ENCODE measurements at regions of chr12 and their contacts with region 1.

Region 1: DNA sequence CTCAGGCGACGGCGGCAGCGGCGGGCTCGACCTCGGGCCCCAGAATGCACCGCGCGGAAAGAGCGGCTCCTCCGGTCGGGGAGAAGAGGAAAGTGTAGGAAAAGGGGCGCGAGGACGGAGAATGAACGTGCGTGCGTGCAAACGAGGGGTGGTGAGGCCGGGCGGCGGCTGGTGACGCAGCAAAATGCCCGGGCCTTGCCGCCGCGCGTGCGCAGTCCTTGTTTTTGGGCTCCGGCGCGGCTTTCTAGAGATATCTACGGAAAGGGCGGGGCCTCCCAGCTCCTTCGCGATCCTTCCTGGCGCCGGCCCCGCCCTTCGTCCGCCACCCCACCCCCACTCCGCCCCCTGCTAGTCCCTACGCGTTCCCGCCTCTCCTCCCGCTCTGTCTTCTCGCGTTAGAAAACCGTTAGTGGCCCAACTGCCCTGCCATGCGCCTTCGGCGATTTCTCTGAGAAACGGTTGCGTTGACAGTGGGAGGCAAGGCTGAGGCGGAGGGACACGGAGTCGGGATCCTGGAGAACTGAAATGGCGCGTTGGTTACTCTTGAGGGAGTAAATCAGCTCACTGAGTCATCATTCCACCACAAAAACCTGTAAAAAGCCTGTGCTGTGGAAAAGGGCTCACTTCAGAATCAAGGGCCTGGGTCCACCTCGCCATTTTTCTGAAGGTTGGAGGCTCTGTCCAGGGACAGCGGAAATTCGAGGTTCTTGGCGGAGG is at the start of gene PTGES3:
- DNase-seq: peak; percentile 93 to 100 (median 97)
- ATAC-seq: peak; percentile 73
- H3K4me3 ChIP-seq: peak within 1 kb of the TSS; percentile 96
- H3K4me3 Mint-ChIP-seq: peak within 1 kb of the TSS; percentile 100
- H3K27ac ChIP-seq: peak within 1 kb of the TSS; percentile 98 to 99
- H3K27ac Mint-ChIP-seq: peak within 1 kb of the TSS; percentile 96
- H3K4me1 ChIP-seq: peaks cover 39% of the 10 kb centered on the region
- H3K4me1 Mint-ChIP-seq: peaks cover 43% of the 10 kb centered on the region
- H3K27me3 ChIP-seq: no peaks in the 10 kb centered on the region
- H3K27me3 Mint-ChIP-seq: no peaks in the 10 kb centered on the region
- CTCF ChIP-seq: no peak
- total RNA-seq, gene PTGES3: 146 to 154 TPM

Region 2: GRCh38 chr12:56657416-56658379 is 30.6 kb before region 1 on chr12:
- CTCF ChIA-PET with region 1: no interaction called
- POLR2A ChIA-PET with region 1: interaction called, 11 read pairs
- intact Hi-C with region 1: no loop called
- DNase-seq: no peak
- ATAC-seq: no peak
- H3K4me3 ChIP-seq: no peak overlapping the region
- H3K4me3 Mint-ChIP-seq: no peak overlapping the region
- H3K27ac ChIP-seq: no peak overlapping the region
- H3K27ac Mint-ChIP-seq: no peak overlapping the region
- H3K4me1 ChIP-seq: no peaks in the 10 kb centered on the region
- H3K4me1 Mint-ChIP-seq: no peaks in the 10 kb centered on the region
- H3K27me3 ChIP-seq: no peaks in the 10 kb centered on the region
- H3K27me3 Mint-ChIP-seq: no peaks in the 10 kb centered on the region
- CTCF ChIP-seq: no peak

Region 3: GRCh38 chr12:56677680-56678079 is 10.6 kb before region 1 on chr12:
- CTCF ChIA-PET with region 1: interaction called, 5 read pairs
- POLR2A ChIA-PET with region 1: interaction called, 64 read pairs
- intact Hi-C with region 1: no loop called
- DNase-seq: no peak
- ATAC-seq: no peak
- H3K4me3 ChIP-seq: no peak overlapping the region
- H3K4me3 Mint-ChIP-seq: peak overlapping the region; percentile 35
- H3K27ac ChIP-seq: no peak overlapping the region
- H3K27ac Mint-ChIP-seq: peak overlapping the region; percentile 74
- H3K4me1 ChIP-seq: peaks cover 74% of the 10 kb centered on the region
- H3K4me1 Mint-ChIP-seq: peaks cover 58% of the 10 kb centered on the region
- H3K27me3 ChIP-seq: no peaks in the 10 kb centered on the region
- H3K27me3 Mint-ChIP-seq: no peaks in the 10 kb centered on the region
- CTCF ChIP-seq: no peak

Region 4: DNA sequence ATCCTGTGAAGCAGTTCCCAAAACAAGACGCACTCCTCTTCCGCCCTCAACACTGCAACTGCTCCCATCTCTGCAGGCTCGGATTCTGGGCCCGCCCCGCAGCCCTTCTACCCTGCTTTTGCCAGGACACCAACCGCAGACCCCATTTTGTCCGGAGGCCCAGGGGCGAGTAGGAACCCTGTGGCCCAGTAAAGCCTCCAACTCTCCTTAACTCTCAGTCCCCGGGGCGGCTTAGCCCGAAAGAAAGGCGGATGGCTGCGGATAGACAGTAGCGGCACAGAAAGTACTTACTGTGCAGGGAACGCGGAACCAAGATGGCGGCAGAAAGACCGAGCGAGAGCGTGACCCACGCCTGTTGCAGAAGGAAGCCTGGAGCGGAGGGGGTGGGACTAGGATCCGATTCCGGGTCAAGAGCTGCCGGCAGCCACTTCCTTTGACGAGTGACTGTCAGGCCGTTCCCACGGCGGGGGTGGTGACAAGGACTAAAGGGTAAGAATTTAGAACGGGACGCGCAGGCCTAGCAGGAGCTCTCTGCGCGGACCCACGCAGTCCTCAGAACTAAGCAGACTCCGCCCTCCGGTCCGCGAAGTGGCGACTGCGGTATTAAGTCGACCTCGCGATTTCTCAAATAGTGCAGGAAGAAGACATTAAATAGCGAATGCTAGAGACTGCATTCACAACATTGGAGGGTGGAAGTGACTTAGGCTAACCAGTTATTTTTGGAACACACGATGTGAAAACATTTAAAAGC is 36.9 kb after region 1 on chr12 and contains the start of gene NACA:
- CTCF ChIA-PET with region 1: interaction called, 3 read pairs
- POLR2A ChIA-PET with region 1: interaction called, 122 read pairs
- intact Hi-C with region 1: loop called (anchors 1 kb)
- DNase-seq: peak; percentile 94 to 99 (median 96)
- ATAC-seq: peak; percentile 93
- H3K4me3 ChIP-seq: peak within 1 kb of the TSS; percentile 97
- H3K4me3 Mint-ChIP-seq: peak within 1 kb of the TSS; percentile 98
- H3K27ac ChIP-seq: peak within 1 kb of the TSS; percentile 86 to 91
- H3K27ac Mint-ChIP-seq: peak within 1 kb of the TSS; percentile 92
- H3K4me1 ChIP-seq: peaks cover 49% of the 10 kb centered on the region
- H3K4me1 Mint-ChIP-seq: peaks cover 60% of the 10 kb centered on the region
- H3K27me3 ChIP-seq: no peaks in the 10 kb centered on the region
- H3K27me3 Mint-ChIP-seq: no peaks in the 10 kb centered on the region
- CTCF ChIP-seq: no peak
- total RNA-seq, gene NACA: 1,441 to 1,479 TPM

Measured in CD4-positive, alpha-beta T cell (primary cell).